Sigmoid colon (tissue), 7 donors: ENCODE measurements at regions of chr21 and their contacts with region 1.

Region 1: DNA sequence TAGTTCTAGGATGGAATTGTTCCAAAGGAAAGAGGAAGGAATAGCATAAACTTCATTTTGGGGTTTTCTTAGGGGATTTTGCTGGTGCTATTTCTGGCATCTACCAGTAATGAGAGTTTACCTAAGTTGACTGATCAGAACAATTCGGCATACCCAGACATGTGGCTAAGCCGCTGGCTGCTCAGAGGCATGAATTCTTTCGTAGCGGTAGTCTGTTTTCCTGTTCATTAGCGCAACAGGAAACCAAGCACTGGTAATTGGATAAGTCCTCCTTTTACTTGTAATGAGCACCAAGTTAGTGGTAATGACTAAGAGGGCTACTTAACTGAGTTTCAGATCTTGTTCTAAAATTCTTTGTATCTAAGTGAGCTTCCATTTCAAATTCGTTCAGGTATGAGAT is 38.6 kb downstream of the C21orf91 start:
- DNase-seq: no peak
- H3K4me3 ChIP-seq: no peak overlapping the region
- H3K27ac ChIP-seq: no peak overlapping the region
- H3K4me1 ChIP-seq: no peaks in the 10 kb centered on the region
- H3K27me3 ChIP-seq: no peaks in the 10 kb centered on the region
- CTCF ChIP-seq: no peak
- EP300 ChIP-seq: no peak
- POLR2A ChIP-seq: no peak

Region 2: GRCh38 chr21:16250273-16250672 is 1530.3 kb before region 1 on chr21:
- intact Hi-C with region 1: no loop called
- DNase-seq: no peak
- H3K4me3 ChIP-seq: no peak overlapping the region
- H3K27ac ChIP-seq: no peak overlapping the region
- H3K4me1 ChIP-seq: no peaks in the 10 kb centered on the region
- H3K27me3 ChIP-seq: no peaks in the 10 kb centered on the region
- CTCF ChIP-seq: no peak
- EP300 ChIP-seq: no peak
- POLR2A ChIP-seq: no peak

Region 3: DNA sequence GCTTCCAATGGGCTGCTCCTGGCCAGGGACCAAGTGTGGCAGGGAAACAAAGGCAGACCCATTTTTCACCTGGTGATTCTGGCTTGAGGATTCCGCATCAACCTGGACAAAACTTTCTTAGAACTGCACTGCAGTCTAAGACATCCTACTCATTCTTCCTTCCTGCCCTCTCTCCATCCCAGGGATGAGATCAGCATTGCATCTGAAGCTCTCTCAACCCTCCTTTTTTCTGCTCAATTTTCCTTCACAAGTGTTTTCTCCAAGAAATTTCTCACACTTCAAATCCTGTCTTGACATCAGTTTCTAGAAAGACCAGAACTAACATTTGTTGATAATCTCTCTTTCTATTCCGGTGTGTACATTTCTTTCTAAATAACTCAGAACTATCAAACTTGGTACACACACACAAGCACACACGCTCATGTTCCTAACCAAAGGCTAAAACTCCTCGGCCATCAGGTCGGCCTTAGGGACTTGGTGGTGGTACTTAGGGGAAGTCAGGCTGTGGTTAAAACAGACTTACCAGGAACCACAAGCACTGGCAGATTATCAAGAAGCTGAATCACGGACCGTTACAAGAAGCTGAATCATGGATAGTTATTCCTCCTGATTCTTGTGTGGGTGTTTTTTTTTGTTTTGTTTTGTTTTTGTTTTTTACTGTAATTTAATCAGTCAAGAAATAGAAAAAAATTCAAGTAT is 288.7 kb before region 1 on chr21:
- intact Hi-C with region 1: no loop called
- DNase-seq: no peak
- H3K4me3 ChIP-seq: no peak overlapping the region
- H3K27ac ChIP-seq: no peak overlapping the region
- H3K4me1 ChIP-seq: no peaks in the 10 kb centered on the region
- H3K27me3 ChIP-seq: no peaks in the 10 kb centered on the region
- CTCF ChIP-seq: no peak
- EP300 ChIP-seq: no peak
- POLR2A ChIP-seq: no peak

Region 4: GRCh38 chr21:17848228-17848627 is 67.7 kb after region 1 on chr21:
- intact Hi-C with region 1: loop called (anchors 10 kb)
- DNase-seq: peak; percentile 64
- H3K4me3 ChIP-seq: no peak overlapping the region
- H3K27ac ChIP-seq: peak overlapping the region in 2 of 4 donors; percentile 25 to 69
- H3K4me1 ChIP-seq: peaks cover 0 to 17% (median 5%) of the 10 kb centered on the region in 4 donors
- H3K27me3 ChIP-seq: no peaks in the 10 kb centered on the region
- CTCF ChIP-seq: no peak
- EP300 ChIP-seq: no peak
- POLR2A ChIP-seq: no peak

Region 5: DNA sequence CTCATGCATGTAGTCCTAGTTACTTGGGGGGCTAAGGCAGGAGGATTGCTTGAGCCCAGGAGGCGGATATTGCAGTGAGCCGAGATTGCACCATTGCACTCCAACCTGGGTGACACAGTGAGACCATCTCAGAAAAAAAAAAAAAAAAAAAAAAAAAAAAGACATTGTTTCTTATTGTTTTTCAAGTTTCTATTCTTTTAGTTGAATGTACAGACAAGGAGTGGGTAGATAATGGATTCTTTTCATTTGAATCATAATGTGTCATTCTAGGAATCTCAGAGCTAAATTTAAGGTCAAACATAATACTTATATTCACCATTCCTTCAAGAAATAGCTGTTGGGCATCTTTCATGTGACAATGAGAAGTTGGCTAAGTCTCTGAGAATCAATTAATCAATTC is 195.6 kb after region 1 on chr21:
- intact Hi-C with region 1: no loop called
- DNase-seq: no peak
- H3K4me3 ChIP-seq: no peak overlapping the region
- H3K27ac ChIP-seq: no peak overlapping the region
- H3K4me1 ChIP-seq: no peaks in the 10 kb centered on the region
- H3K27me3 ChIP-seq: no peaks in the 10 kb centered on the region
- CTCF ChIP-seq: no peak
- EP300 ChIP-seq: no peak
- POLR2A ChIP-seq: no peak